A549 (cell line): ENCODE measurements at regions of chr6 and their contacts with region 1.

Region 1: DNA sequence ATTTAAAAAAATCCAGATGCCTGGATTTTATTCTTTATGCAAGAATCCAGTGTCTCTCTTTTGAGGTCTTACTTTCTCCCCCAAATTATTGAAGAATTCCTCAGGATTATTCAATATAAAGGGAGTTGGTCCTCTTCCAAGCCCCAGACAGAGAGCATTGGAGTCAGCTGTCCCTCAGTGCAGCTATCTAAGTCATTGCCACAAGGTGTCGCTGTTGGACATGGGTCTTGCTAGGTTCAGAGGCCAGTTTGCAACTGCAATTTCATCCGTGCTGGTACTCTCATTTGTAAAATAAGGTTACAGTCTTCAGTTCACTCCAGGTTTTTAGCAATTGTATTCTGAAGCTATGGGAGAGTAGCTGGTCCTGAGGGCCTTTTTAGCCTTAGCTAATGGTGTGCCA is 27.8 kb downstream of the CCN2 start:
- DNase-seq: peak in 1 of 2 experiments; percentile 78
- ATAC-seq: peak; percentile 59 to 80; a peak in 3 of 6 replicates
- H3K4me3 ChIP-seq: no peak overlapping the region
- H3K27ac ChIP-seq: no peak overlapping the region
- H3K4me1 ChIP-seq: 0 out of 3 replicates have a peak, but pooled peaks cover 3% of the 10 kb centered on the region
- CTCF ChIP-seq: peak; percentile 36
- EP300 ChIP-seq: no peak
- POLR2A ChIP-seq: no peak
- RAD21 ChIP-seq: peak; percentile 23 to 65; a peak in 2 of 5 replicates

Region 2: DNA sequence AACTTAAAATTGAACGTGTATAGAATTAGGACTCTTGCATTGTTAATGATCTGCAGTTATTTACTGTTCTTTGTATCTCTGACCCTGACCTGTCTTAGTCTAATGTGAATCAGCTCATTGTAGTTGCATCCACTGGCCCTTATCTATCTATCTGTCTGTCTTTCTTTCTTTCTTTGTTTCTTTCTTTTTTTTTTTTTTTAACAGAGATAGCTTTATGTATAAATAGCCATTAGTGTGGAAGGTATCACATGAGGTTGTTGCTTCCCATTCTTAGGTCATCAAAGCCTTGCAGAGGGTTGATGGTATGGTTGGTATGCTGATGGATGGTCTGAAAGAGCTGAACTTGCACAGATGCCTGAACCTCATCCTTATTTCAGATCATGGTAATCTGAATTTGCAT is 55.6 kb before region 1 on chr6:
- CTCF ChIA-PET with region 1: no interaction called
- POLR2A ChIA-PET with region 1: no interaction called
- DNase-seq: no peak
- ATAC-seq: no peak
- H3K4me3 ChIP-seq: no peak overlapping the region
- H3K27ac ChIP-seq: no peak overlapping the region
- H3K4me1 ChIP-seq: peaks cover 13% of the 10 kb centered on the region; the same call in 2 of the 3 replicates
- CTCF ChIP-seq: no peak
- EP300 ChIP-seq: no peak
- POLR2A ChIP-seq: no peak
- RAD21 ChIP-seq: no peak

Region 3: GRCh38 chr6:131949909-131950766 is 26.8 kb after region 1 on chr6:
- CTCF ChIA-PET with region 1: interaction called, 12 read pairs
- POLR2A ChIA-PET with region 1: no interaction called
- DNase-seq: peak; percentile 50 to 75
- ATAC-seq: peak; percentile 57 to 71
- H3K4me3 ChIP-seq: peak overlapping the region; percentile 90
- H3K27ac ChIP-seq: peak overlapping the region; percentile 90 to 97
- H3K4me1 ChIP-seq: peaks cover 54% of the 10 kb centered on the region
- CTCF ChIP-seq: peak; percentile 43
- EP300 ChIP-seq: no peak
- POLR2A ChIP-seq: no peak
- RAD21 ChIP-seq: peak; percentile 40 to 50

Region 4: GRCh38 chr6:132218059-132218696 is 294.8 kb after region 1 on chr6:
- CTCF ChIA-PET with region 1: interaction called, 32 read pairs
- POLR2A ChIA-PET with region 1: no interaction called
- DNase-seq: no peak
- ATAC-seq: no peak
- H3K4me3 ChIP-seq: no peak overlapping the region
- H3K27ac ChIP-seq: no peak overlapping the region
- H3K4me1 ChIP-seq: no peaks in the 10 kb centered on the region
- CTCF ChIP-seq: peak; percentile 57
- EP300 ChIP-seq: no peak
- POLR2A ChIP-seq: no peak
- RAD21 ChIP-seq: peak; percentile 48 to 53

Region 5: GRCh38 chr6:132270726-132271402 is 347.5 kb after region 1 on chr6:
- CTCF ChIA-PET with region 1: interaction called, 11 read pairs
- POLR2A ChIA-PET with region 1: no interaction called
- DNase-seq: no peak
- ATAC-seq: no peak
- H3K4me3 ChIP-seq: no peak overlapping the region
- H3K27ac ChIP-seq: no peak overlapping the region
- H3K4me1 ChIP-seq: no peaks in the 10 kb centered on the region
- CTCF ChIP-seq: no peak
- EP300 ChIP-seq: no peak
- POLR2A ChIP-seq: no peak
- RAD21 ChIP-seq: no peak